Aorta (tissue), 5 donors: ENCODE measurements at regions of chr17 and their contacts with region 1.

Region 1: GRCh38 chr17:12320286-12320685 is 299.6 kb downstream of the MAP2K4 start:
- DNase-seq: no peak
- ATAC-seq: no peak
- H3K4me3 ChIP-seq: no peak overlapping the region
- H3K27ac ChIP-seq: peak overlapping the region in 1 of 2 donors; percentile 59
- H3K4me1 ChIP-seq: peaks cover 0 to 6% of the 10 kb centered on the region in 2 donors
- H3K27me3 ChIP-seq: no peaks in the 10 kb centered on the region

Region 2: DNA sequence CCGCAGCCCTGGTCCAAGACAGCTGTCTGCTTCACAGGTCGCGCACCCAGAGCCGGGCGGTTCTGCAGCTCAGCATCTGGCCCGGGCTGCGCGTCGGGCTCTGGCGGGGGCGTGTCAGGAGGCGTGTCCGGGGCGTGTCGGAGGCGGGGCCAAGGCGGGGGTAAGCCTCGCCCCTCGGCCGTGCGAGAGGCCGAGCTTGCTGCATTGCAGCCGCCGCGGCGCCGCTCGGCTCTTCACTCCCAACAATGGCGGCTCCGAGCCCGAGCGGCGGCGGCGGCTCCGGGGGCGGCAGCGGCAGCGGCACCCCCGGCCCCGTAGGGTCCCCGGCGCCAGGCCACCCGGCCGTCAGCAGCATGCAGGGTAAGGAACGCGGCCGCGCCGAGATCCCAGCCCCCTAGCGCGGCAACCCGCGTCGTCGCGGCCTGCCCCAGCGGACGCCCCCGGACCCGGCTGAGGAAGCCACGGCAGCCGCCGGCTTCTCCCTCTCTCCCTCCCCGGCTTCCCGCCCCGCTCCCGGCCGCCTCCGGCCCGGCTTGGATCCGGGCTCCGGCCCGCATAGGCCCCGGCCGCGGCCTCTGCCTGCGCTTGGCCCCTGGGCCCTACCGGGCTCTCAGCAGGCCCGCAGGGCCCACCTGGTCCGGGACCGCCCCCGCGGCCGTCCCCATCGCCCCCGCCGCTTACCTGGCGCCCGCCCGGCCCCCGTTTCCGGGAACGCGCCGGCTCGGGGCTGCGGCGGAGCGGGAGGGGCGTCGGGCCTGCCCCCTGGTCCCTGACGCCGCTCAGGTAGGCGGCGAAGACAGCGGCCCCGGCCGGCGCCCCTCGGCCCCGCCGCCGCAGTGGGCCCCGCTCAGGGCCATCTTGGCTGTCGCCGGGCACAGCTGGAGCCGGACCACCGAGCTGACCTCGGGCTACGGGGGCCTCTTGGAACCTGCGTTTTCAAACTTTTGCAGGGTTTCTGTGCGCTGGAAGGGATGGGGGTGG is 299.4 kb before region 1 on chr17 and contains the start of gene MAP2K4:
- intact Hi-C with region 1: no loop called
- DNase-seq: peak; percentile 95 to 98
- ATAC-seq: peak; percentile 100
- H3K4me3 ChIP-seq: peak within 1 kb of the TSS; percentile 78 to 100
- H3K27ac ChIP-seq: peak within 1 kb of the TSS; percentile 80
- H3K4me1 ChIP-seq: peaks cover 2 to 6% of the 10 kb centered on the region in 2 donors
- H3K27me3 ChIP-seq: no peaks in the 10 kb centered on the region
- total RNA-seq, gene MAP2K4: 34.3 to 39.3 TPM

Region 3: GRCh38 chr17:12107905-12108304 is 212.4 kb before region 1 on chr17:
- intact Hi-C with region 1: no loop called
- DNase-seq: no peak
- ATAC-seq: no peak
- H3K4me3 ChIP-seq: no peak overlapping the region
- H3K27ac ChIP-seq: no peak overlapping the region
- H3K4me1 ChIP-seq: no peaks in the 10 kb centered on the region
- H3K27me3 ChIP-seq: no peaks in the 10 kb centered on the region

Region 4: GRCh38 chr17:12256380-12256995 is 63.8 kb before region 1 on chr17:
- intact Hi-C with region 1: loop called in 1 of 2 experiments (anchors 5 kb)
- DNase-seq: no peak
- ATAC-seq: peak; percentile 77
- H3K4me3 ChIP-seq: peak overlapping the region; percentile 23 to 35
- H3K27ac ChIP-seq: no peak overlapping the region
- H3K4me1 ChIP-seq: no peaks in the 10 kb centered on the region
- H3K27me3 ChIP-seq: no peaks in the 10 kb centered on the region

Region 5: GRCh38 chr17:12341328-12341727 is 21.0 kb after region 1 on chr17:
- intact Hi-C with region 1: loop called in 1 of 2 experiments (anchors 2 kb)
- DNase-seq: no peak
- ATAC-seq: no peak
- H3K4me3 ChIP-seq: no peak overlapping the region
- H3K27ac ChIP-seq: no peak overlapping the region
- H3K4me1 ChIP-seq: no peaks in the 10 kb centered on the region
- H3K27me3 ChIP-seq: no peaks in the 10 kb centered on the region

Region 6: DNA sequence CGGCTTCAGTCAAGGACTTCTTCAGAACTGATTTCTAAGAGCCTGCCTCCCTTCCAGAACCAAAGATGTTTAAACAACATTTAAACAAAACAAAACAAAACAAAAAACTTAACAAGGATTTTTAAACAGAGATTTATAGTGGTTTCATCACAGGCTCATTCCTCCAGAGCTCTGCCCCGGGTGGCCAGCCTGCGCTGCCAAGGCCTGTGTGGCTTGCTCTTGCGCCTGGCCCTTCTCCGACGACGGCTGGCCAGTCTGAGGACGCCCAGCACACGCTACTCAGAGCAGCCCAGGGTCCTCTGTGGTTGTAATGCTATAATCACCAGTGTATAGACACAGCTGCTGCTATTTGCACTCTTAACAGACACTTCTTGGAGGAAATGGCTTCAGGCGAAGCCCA is 38.2 kb after region 1 on chr17:
- intact Hi-C with region 1: loop called (anchors 5 kb)
- DNase-seq: peak in 1 of 2 donors; percentile 52
- ATAC-seq: peak; percentile 78
- H3K4me3 ChIP-seq: no peak overlapping the region
- H3K27ac ChIP-seq: no peak overlapping the region
- H3K4me1 ChIP-seq: peaks cover 2 to 4% of the 10 kb centered on the region in 2 donors
- H3K27me3 ChIP-seq: no peaks in the 10 kb centered on the region

Region 7: GRCh38 chr17:12376276-12376675 is 56.0 kb after region 1 on chr17:
- intact Hi-C with region 1: no loop called
- DNase-seq: no peak
- ATAC-seq: no peak
- H3K4me3 ChIP-seq: no peak overlapping the region
- H3K27ac ChIP-seq: no peak overlapping the region
- H3K4me1 ChIP-seq: no peaks in the 10 kb centered on the region
- H3K27me3 ChIP-seq: no peaks in the 10 kb centered on the region